Upper lobe of right lung (tissue), 1 donor: ENCODE measurements at regions of chr12 and their contacts with region 1.

Region 1: DNA sequence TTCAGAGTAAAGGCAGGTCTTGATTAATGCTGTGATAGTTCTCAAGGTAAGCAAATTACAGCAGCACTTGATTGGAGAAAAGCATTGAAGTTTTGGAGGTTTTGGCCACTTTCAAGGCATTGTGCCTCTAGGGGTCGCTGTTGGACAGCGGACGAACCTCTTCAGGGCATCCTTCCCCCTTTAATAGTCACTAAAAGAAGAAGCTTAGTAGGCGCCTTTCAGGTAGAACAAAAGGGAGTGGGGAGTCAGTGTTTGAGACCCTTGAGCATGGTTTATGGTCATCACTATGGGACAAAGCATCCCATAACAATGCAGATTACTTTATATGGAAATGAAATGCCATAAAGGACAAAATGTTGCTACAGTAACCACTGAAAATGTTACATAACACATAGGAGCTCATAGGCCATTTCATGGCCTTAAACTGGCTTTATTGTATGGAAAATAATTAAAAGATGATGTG is 199.5 kb upstream of the DCN start:
- DNase-seq: peak; percentile 84
- ATAC-seq: peak; percentile 93
- H3K4me3 ChIP-seq: peak overlapping the region; percentile 39
- H3K27ac ChIP-seq: peak overlapping the region; percentile 18
- H3K4me1 ChIP-seq: peaks cover 8% of the 10 kb centered on the region
- H3K27me3 ChIP-seq: no peaks in the 10 kb centered on the region
- CTCF ChIP-seq: peak; percentile 89

Region 2: GRCh38 chr12:92570056-92570753 is 1188.1 kb after region 1 on chr12:
- intact Hi-C with region 1: loop called (anchors 5 kb)
- DNase-seq: no peak
- ATAC-seq: peak; percentile 85
- H3K4me3 ChIP-seq: no peak overlapping the region
- H3K27ac ChIP-seq: no peak overlapping the region
- H3K4me1 ChIP-seq: peaks cover 12% of the 10 kb centered on the region
- H3K27me3 ChIP-seq: no peaks in the 10 kb centered on the region
- CTCF ChIP-seq: peak; percentile 78